ENCODE measurements at regions of chr12 and their contacts with region 1.

Region 1: GRCh38 chr12:88993651-88994050 is 358.6 kb downstream of the DUSP6 start:
- DNase-seq: no peak
- H3K4me3 ChIP-seq: no peak overlapping the region
- H3K27ac ChIP-seq: no peak overlapping the region
- H3K4me1 ChIP-seq: peaks cover 0 to 16% (median 5%) of the 10 kb centered on the region in 4 donors
- H3K27me3 ChIP-seq: no peaks in the 10 kb centered on the region
- CTCF ChIP-seq: peak; percentile 62 to 70 (median 66)
- EP300 ChIP-seq: no peak
- POLR2A ChIP-seq: no peak

Region 2: DNA sequence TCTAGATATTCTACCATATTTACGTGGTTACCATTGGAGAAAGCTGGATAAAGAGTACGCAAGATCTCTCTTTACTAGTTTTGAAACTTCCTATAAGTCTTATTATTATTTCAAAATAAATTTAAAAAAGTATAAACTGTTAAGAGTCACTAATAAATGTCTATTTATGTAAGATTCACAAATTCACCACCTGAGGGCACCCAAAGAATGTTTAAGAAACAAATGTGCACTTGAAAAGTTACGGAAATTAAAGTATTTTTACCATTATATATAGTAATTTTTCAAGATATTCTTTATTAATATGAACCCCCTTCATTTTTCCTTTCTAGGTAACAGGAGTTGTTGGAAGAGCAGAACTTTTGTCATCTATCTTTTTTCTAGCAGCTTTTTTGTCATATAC is 839.7 kb before region 1 on chr12:
- intact Hi-C with region 1: loop called (anchors 5 kb)
- DNase-seq: no peak
- H3K4me3 ChIP-seq: no peak overlapping the region
- H3K27ac ChIP-seq: no peak overlapping the region
- H3K4me1 ChIP-seq: peaks cover 0 to 18% (median 4%) of the 10 kb centered on the region in 4 donors
- H3K27me3 ChIP-seq: no peaks in the 10 kb centered on the region
- CTCF ChIP-seq: peak; percentile 34 to 50 (median 42)
- EP300 ChIP-seq: no peak
- POLR2A ChIP-seq: no peak